Activated CD8-positive, alpha-beta T cell treated with anti-CD3 and anti-CD28 coated beads for 36 hours (primary cell): ENCODE measurements at regions of chrX and their contacts with region 1.

Region 1: GRCh38 chrX:15471016-15471415 is 22.1 kb downstream of the PIR start:
- DNase-seq: peak; percentile 64
- ATAC-seq: peak; percentile 77
- H3K4me3 Mint-ChIP-seq: no peak overlapping the region
- H3K27ac Mint-ChIP-seq: no peak overlapping the region
- H3K4me1 Mint-ChIP-seq: no peaks in the 10 kb centered on the region
- H3K27me3 Mint-ChIP-seq: peaks cover 1% of the 10 kb centered on the region
- CTCF ChIP-seq: peak; percentile 59

Region 2: GRCh38 chrX:15299941-15300851 is 170.8 kb before region 1 on chrX:
- CTCF ChIA-PET with region 1: interaction called, 6 read pairs
- POLR2A ChIA-PET with region 1: no interaction called
- intact Hi-C with region 1: loop called (anchors 5 kb)
- DNase-seq: no peak
- ATAC-seq: no peak
- H3K4me3 Mint-ChIP-seq: no peak overlapping the region
- H3K27ac Mint-ChIP-seq: no peak overlapping the region
- H3K4me1 Mint-ChIP-seq: no peaks in the 10 kb centered on the region
- H3K27me3 Mint-ChIP-seq: no peaks in the 10 kb centered on the region
- CTCF ChIP-seq: peak; percentile 41

Region 3: GRCh38 chrX:15349046-15349445 is 122.0 kb before region 1 on chrX:
- CTCF ChIA-PET with region 1: interaction called, 20 read pairs
- POLR2A ChIA-PET with region 1: no interaction called
- intact Hi-C with region 1: loop called (anchors 10 kb)
- DNase-seq: peak; percentile 11
- ATAC-seq: peak; percentile 49
- H3K4me3 Mint-ChIP-seq: no peak overlapping the region
- H3K27ac Mint-ChIP-seq: no peak overlapping the region
- H3K4me1 Mint-ChIP-seq: no peaks in the 10 kb centered on the region
- H3K27me3 Mint-ChIP-seq: no peaks in the 10 kb centered on the region
- CTCF ChIP-seq: peak; percentile 49

Region 4: GRCh38 chrX:15564981-15565579 is 94.1 kb after region 1 on chrX:
- CTCF ChIA-PET with region 1: interaction called, 4 read pairs
- POLR2A ChIA-PET with region 1: no interaction called
- intact Hi-C with region 1: loop called (anchors 1 kb)
- DNase-seq: peak; percentile 59
- ATAC-seq: peak; percentile 62
- H3K4me3 Mint-ChIP-seq: no peak overlapping the region
- H3K27ac Mint-ChIP-seq: no peak overlapping the region
- H3K4me1 Mint-ChIP-seq: no peaks in the 10 kb centered on the region
- H3K27me3 Mint-ChIP-seq: peaks cover 6% of the 10 kb centered on the region
- CTCF ChIP-seq: peak; percentile 17

Region 5: DNA sequence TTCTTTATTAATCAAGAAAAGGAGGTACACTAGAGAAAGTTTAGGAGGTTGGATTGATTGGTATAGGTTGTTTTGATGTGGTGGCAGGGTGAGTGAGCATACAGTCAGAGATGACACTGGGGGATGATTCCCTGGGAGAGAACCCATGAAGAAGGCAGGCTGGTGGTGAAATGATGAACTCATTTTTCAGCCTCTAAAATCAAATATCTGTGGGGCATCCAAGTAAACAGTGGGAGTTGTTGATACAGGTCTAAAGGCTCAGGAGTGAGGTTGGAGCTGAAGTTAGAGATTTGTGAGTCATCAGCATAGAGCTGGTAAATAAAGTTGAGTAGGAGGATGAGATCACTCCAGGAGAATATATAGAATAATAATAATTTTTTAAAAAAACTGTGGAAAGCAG is 393.6 kb after region 1 on chrX:
- CTCF ChIA-PET with region 1: no interaction called
- POLR2A ChIA-PET with region 1: no interaction called
- intact Hi-C with region 1: no loop called
- DNase-seq: no peak
- ATAC-seq: no peak
- H3K4me3 Mint-ChIP-seq: no peak overlapping the region
- H3K27ac Mint-ChIP-seq: no peak overlapping the region
- H3K4me1 Mint-ChIP-seq: no peaks in the 10 kb centered on the region
- H3K27me3 Mint-ChIP-seq: peaks cover 2% of the 10 kb centered on the region
- CTCF ChIP-seq: no peak